Calu3 (cell line): ENCODE measurements at regions of chr17 and their contacts with region 1.

Region 1: DNA sequence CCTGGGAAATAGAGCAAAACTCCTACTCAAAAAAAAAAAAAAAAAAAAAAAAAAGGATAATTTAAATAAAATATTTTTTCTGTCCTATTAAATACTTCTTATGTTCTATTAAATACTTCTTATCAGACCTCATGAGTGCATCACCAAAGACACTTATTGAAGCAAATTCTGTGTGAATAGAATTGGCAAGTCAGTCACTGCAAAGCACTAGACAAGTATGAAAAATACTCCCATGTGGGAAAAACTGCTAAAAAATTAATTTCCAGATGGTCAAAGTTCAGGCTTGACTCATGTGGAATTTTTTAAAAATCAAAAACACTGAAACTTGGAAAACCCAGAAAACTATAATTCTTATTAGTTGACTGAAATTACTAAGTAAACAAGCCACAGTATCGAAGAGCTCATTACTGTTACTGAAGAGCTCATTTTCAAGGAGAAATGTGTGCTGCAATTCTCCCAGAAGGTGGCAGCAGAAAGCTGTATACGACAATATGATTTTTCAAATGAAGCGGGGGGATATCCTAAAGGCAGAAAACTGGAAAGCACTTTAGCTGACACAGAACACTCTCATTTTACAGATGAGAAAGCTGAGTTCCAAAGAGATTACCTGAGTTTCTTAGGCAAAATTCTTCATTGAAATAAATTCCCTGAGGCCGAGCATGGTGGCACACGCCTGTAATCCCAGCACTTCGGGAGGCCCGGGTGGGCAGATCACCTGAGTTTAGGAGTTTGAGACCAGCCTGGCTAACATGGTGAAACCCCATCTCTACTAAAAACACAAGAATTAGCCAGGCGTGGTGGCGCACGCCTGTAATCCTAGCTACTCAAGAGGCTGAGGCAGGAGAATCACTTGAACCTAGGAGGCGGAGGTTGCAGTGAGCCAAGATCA is 15.9 kb upstream of the FBXO47 start:
- DNase-seq: peak; percentile 85
- H3K4me3 Mint-ChIP-seq: no peak overlapping the region
- H3K27ac Mint-ChIP-seq: no peak overlapping the region
- H3K4me1 Mint-ChIP-seq: no peaks in the 10 kb centered on the region
- H3K27me3 Mint-ChIP-seq: peaks cover 44% of the 10 kb centered on the region
- CTCF ChIP-seq: peak; percentile 98

Region 2: DNA sequence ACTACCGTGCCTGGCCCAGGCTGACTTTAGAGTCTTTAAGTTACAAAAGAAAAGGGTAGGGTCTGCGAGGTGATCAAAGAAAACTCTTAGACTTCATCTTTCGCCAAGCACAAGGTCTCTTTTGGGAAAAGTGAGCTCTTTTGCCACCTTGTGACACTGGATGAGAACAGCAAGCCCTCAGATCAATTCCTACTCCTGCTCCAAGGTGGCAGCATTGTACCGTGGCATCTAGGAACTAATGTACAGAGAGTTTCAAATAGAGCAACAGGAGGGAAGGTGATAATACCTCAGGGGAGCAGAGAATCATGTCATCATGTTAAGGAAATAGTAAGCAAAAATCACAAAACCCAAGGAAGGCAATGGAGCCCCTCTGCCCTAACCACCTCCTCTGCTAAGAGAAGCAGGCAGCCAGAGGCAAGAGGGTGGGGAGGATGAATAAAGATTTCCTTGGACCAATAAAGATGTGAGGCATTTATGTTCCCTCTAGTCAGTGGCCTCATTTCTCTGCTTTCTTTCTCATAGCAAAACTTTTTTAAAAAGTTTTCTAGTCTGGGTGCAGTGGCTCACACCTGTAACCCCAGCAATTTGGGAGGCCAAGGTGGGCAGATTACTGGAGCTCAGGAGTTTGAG is 1609.5 kb before region 1 on chr17:
- CTCF ChIA-PET with region 1: interaction called, 15 read pairs
- intact Hi-C with region 1: no loop called
- DNase-seq: peak; percentile 95
- H3K4me3 Mint-ChIP-seq: no peak overlapping the region
- H3K27ac Mint-ChIP-seq: no peak overlapping the region
- H3K4me1 Mint-ChIP-seq: peaks cover 9% of the 10 kb centered on the region
- H3K27me3 Mint-ChIP-seq: no peaks in the 10 kb centered on the region
- CTCF ChIP-seq: peak; percentile 100

Region 3: DNA sequence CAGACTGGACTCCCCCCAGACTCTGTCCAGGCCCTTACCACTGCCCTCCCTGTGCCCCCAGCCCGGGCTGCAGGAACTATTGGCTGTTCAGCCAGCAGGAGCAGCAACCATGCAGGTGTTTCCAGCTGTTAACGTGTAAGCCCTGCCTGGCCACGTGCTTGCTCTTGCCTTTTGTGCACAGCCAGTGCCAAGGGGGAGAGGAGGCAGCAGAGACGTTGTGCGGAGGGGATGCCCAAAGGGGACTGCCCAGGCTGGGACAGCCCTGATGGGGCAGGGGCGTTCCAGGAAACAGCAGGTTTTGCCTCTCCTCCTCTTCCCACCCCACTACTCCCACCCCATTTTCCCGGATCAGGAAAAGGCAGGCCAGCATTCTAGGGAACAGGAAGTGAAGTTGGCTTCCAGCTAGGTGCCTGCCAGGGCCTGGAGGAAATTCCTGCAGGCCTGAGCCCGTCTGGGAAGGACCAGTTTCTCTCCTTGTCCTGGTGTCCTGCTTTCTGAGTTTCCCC is 74.4 kb before region 1 on chr17:
- CTCF ChIA-PET with region 1: no interaction called
- intact Hi-C with region 1: no loop called
- DNase-seq: no peak
- H3K4me3 Mint-ChIP-seq: no peak overlapping the region
- H3K27ac Mint-ChIP-seq: no peak overlapping the region
- H3K4me1 Mint-ChIP-seq: peaks cover 11% of the 10 kb centered on the region
- H3K27me3 Mint-ChIP-seq: no peaks in the 10 kb centered on the region
- CTCF ChIP-seq: no peak

Region 4: GRCh38 chr17:39001703-39002637 is 18.9 kb after region 1 on chr17:
- CTCF ChIA-PET with region 1: interaction called, 13 read pairs
- intact Hi-C with region 1: no loop called
- DNase-seq: peak; percentile 93
- H3K4me3 Mint-ChIP-seq: peak overlapping the region; percentile 0
- H3K27ac Mint-ChIP-seq: no peak overlapping the region
- H3K4me1 Mint-ChIP-seq: peaks cover 25% of the 10 kb centered on the region
- H3K27me3 Mint-ChIP-seq: peaks cover 58% of the 10 kb centered on the region
- CTCF ChIP-seq: no peak

Region 5: DNA sequence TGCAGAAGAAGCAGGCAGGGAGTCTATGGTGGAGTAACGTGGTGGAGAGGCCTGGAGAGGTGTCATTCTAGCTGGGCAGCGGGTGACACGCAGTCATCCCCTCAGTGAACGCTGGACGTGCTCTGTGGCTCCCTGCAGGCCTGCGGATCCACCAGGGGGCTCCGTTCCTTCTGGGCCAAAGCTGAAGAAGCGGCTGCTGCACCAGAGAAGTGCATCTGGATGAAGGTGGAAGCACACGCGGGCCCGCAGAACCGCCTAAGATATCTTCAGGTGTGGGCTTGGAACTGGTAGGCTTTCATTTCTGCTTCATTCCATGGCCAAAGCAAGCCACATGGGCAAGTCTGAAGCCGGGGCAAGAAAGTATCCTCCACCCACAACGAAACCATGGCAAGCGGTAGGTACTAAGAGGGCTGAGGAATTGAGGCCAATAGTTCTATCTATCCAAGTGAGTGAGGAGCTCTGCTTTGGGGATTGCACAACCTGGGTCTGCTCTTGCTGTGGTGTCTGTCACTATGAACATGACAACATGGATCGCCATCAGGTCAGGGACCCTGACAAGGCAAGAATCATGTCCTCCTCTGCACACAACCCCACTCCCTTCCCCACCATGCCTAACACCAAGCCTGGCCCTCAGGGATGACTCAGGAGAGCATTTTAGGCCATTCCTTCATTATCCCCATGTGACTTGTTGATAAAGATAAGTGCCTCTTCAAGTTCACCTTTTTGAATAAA is 63.0 kb after region 1 on chr17:
- CTCF ChIA-PET with region 1: interaction called, 11 read pairs
- intact Hi-C with region 1: no loop called
- DNase-seq: no peak
- H3K4me3 Mint-ChIP-seq: no peak overlapping the region
- H3K27ac Mint-ChIP-seq: no peak overlapping the region
- H3K4me1 Mint-ChIP-seq: no peaks in the 10 kb centered on the region
- H3K27me3 Mint-ChIP-seq: peaks cover 63% of the 10 kb centered on the region
- CTCF ChIP-seq: peak; percentile 37

Region 6: DNA sequence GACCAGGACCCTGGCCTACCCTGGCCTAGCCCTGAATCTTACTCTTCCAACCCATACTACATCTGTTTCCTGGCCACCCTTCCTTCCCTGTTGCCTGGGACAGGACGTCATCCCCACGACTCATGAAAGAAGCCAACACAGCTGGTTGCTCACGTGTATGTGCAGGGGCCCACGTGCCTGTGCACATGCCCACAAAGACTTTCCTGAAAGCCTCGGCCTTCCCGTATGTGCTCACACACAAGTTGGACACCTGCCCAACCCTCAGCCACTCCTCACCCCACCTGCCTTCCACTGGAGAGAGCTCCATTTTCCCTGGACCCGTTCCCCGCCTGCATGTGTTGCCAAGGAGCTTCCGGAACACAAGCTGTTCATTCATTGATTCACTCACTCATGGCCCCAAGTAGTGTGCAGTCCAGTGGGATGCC is 161.3 kb after region 1 on chr17:
- CTCF ChIA-PET with region 1: interaction called, 502 read pairs
- intact Hi-C with region 1: no loop called
- DNase-seq: peak; percentile 87
- H3K4me3 Mint-ChIP-seq: no peak overlapping the region
- H3K27ac Mint-ChIP-seq: no peak overlapping the region
- H3K4me1 Mint-ChIP-seq: peaks cover 11% of the 10 kb centered on the region
- H3K27me3 Mint-ChIP-seq: peaks cover 47% of the 10 kb centered on the region
- CTCF ChIP-seq: no peak

Region 7: GRCh38 chr17:39186481-39187002 is 203.4 kb after region 1 on chr17:
- CTCF ChIA-PET with region 1: no interaction called
- intact Hi-C with region 1: no loop called
- DNase-seq: no peak
- H3K4me3 Mint-ChIP-seq: no peak overlapping the region
- H3K27ac Mint-ChIP-seq: no peak overlapping the region
- H3K4me1 Mint-ChIP-seq: no peaks in the 10 kb centered on the region
- H3K27me3 Mint-ChIP-seq: no peaks in the 10 kb centered on the region
- CTCF ChIP-seq: no peak

Region 8: GRCh38 chr17:39199820-39200069 is 216.6 kb after region 1 on chr17:
- CTCF ChIA-PET with region 1: interaction called, 18 read pairs
- intact Hi-C with region 1: loop called (anchors 1 kb)
- DNase-seq: peak; percentile 99
- H3K4me3 Mint-ChIP-seq: peak overlapping the region; percentile 86
- H3K27ac Mint-ChIP-seq: peak overlapping the region; percentile 99
- H3K4me1 Mint-ChIP-seq: peaks cover 41% of the 10 kb centered on the region
- H3K27me3 Mint-ChIP-seq: no peaks in the 10 kb centered on the region
- CTCF ChIP-seq: no peak

Region 9: GRCh38 chr17:39782485-39782884 is 799.4 kb after region 1 on chr17:
- CTCF ChIA-PET with region 1: no interaction called
- intact Hi-C with region 1: no loop called
- DNase-seq: peak; percentile 100
- H3K4me3 Mint-ChIP-seq: peak overlapping the region; percentile 64
- H3K27ac Mint-ChIP-seq: peak overlapping the region; percentile 89
- H3K4me1 Mint-ChIP-seq: peaks cover 52% of the 10 kb centered on the region
- H3K27me3 Mint-ChIP-seq: no peaks in the 10 kb centered on the region
- CTCF ChIP-seq: no peak